ENCODE measurements at regions of chr18 and their contacts with region 1.

Region 1: DNA sequence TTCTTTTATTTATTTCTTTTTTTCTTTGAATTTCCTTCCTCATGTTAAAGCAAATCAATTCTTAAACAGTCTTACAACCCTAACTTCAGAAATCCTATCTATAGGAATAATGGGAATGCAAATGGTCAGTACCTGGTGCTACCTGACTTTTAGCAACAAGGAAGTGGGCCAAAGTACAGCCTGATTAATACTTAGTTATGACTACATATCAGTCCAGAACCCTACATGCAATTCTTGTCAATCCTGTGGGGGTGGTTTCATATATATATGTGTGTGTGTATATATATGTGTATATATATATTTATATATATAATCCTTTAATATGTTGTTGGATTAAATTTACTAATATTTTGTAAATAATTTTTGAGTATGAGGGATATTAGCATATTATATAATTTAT is 14.8 kb upstream of the TRAPPC8 start:
- DNase-seq: no peak
- H3K4me3 Mint-ChIP-seq: no peak overlapping the region
- H3K27ac Mint-ChIP-seq: no peak overlapping the region
- H3K4me1 Mint-ChIP-seq: peaks cover 11% of the 10 kb centered on the region
- H3K27me3 Mint-ChIP-seq: no peaks in the 10 kb centered on the region
- CTCF ChIP-seq: no peak

Region 2: DNA sequence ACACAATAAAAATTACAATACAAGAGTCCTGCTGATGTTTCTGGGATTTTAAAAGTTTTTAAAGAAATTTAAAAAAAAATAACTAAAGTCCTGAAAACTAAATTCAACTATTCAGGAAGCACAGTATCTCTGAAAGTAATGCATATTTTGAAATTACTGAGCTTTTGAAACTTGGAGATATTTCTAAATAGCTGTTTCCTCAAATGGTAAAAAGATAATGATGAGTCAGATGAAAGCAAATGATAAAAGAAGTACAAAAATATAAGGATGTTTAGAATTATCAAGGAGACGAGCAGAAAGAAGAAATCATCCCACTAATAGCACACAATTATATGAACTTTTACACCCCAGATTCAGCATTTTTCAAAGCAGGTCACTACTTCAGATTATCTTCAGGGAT is 106.9 kb before region 1 on chr18:
- CTCF ChIA-PET with region 1: no interaction called
- intact Hi-C with region 1: loop called (anchors 5 kb)
- DNase-seq: no peak
- H3K4me3 Mint-ChIP-seq: no peak overlapping the region
- H3K27ac Mint-ChIP-seq: no peak overlapping the region
- H3K4me1 Mint-ChIP-seq: no peaks in the 10 kb centered on the region
- H3K27me3 Mint-ChIP-seq: no peaks in the 10 kb centered on the region
- CTCF ChIP-seq: no peak